Activated CD4-positive, alpha-beta memory T cell treated with anti-CD3 and anti-CD28 coated beads, Interleukin-2, amount 10 ng/mL, durations not matched to agents 7 days and 5 days (primary cell): ENCODE measurements at regions of chr1 and their contacts with region 1.

Region 1: DNA sequence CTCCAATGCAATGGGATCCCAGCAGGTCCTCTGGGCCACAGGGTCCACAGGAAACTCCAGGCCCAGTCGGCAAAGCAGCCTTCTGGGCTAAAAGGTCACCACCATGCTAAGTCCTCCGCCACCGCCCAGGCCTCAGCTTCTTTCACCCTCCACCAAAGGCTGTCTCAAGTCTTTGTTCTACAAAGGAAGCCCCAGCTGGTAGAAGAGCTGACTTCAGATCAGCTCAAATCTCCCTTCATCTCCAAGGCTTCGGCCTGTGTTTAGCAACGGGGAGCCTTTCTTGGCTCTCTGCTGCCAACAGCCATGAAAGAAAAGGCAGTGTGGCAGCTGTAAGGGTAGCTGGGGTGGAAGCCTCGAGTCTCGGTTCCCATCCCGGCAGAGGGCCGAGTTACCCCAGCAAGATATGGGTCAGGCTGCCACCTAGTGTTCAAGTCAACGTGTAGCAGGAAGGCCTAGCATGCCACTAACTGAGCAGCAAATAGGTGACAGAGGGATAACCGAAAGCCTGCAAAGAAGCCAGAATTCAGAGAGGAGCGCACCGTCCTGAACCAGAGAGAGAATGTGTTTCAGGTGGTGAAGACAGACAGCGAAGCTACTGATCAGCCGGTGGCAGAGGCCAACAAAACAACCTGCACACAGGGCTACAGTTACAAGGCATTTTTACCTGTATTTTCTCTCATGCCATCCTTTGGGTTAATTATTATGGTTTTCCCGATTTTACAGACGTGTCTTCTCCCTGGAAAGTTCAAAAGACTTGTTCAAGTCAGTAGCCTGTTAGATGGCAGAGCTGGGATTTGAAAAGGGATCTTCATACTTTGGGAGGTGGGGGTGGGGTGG is 26.8 kb upstream of the CRNN start:
- DNase-seq: peak; percentile 72
- H3K4me3 Mint-ChIP-seq: no peak overlapping the region
- H3K27ac Mint-ChIP-seq: no peak overlapping the region
- H3K4me1 Mint-ChIP-seq: peaks cover 2% of the 10 kb centered on the region
- H3K27me3 Mint-ChIP-seq: peaks cover 25% of the 10 kb centered on the region

Region 2: GRCh38 chr1:152398812-152399698 is 41.8 kb before region 1 on chr1:
- CTCF ChIA-PET with region 1: interaction called, 15 read pairs
- POLR2A ChIA-PET with region 1: no interaction called
- DNase-seq: no peak
- H3K4me3 Mint-ChIP-seq: no peak overlapping the region
- H3K27ac Mint-ChIP-seq: no peak overlapping the region
- H3K4me1 Mint-ChIP-seq: no peaks in the 10 kb centered on the region
- H3K27me3 Mint-ChIP-seq: peaks cover 2% of the 10 kb centered on the region

Region 3: DNA sequence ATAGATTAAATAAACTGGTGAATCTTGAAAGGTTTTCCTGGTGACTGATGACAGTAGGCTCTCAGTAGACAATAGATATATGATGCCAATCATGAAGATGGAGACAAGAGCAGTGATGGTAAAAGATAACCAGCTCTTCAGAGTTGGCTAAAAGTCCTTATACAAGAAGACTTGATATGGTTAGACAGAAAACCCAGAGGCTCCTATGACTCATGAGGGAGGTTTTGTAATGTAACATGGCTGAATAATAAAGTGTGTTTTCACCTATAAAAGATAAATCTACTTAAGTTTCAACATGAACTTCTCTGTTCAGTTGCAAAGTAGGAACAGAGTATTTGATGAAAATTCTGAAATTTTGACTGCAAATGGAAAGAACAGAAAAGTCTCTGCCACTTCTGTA is 14.1 kb before region 1 on chr1:
- CTCF ChIA-PET with region 1: interaction called, 11 read pairs
- POLR2A ChIA-PET with region 1: no interaction called
- DNase-seq: no peak
- H3K4me3 Mint-ChIP-seq: no peak overlapping the region
- H3K27ac Mint-ChIP-seq: no peak overlapping the region
- H3K4me1 Mint-ChIP-seq: no peaks in the 10 kb centered on the region
- H3K27me3 Mint-ChIP-seq: no peaks in the 10 kb centered on the region